Transverse colon (tissue), 4 donors: ENCODE measurements at regions of chr1 and their contacts with region 1.

Region 1: GRCh38 chr1:64421377-64421776 is 48.6 kb upstream of the CACHD1 start:
- DNase-seq: no peak
- H3K4me3 ChIP-seq: no peak overlapping the region
- H3K27ac ChIP-seq: no peak overlapping the region
- H3K4me1 ChIP-seq: no peaks in the 10 kb centered on the region
- H3K27me3 ChIP-seq: no peaks in the 10 kb centered on the region
- CTCF ChIP-seq: no peak
- EP300 ChIP-seq: no peak
- POLR2A ChIP-seq: no peak

Region 2: GRCh38 chr1:64171797-64172281 is 249.5 kb before region 1 on chr1:
- in situ Hi-C with region 1: no loop called
- intact Hi-C with region 1: no loop called
- DNase-seq: no peak
- H3K4me3 ChIP-seq: no peak overlapping the region
- H3K27ac ChIP-seq: peak overlapping the region in 2 of 4 donors; percentile 8 to 14
- H3K4me1 ChIP-seq: peaks cover 0 to 22% (median 13%) of the 10 kb centered on the region in 4 donors
- H3K27me3 ChIP-seq: no peaks in the 10 kb centered on the region
- CTCF ChIP-seq: no peak
- EP300 ChIP-seq: no peak
- POLR2A ChIP-seq: no peak

Region 3: GRCh38 chr1:64292399-64292798 is 129.0 kb before region 1 on chr1:
- in situ Hi-C with region 1: no loop called
- intact Hi-C with region 1: loop called (anchors 10 kb)
- DNase-seq: no peak
- H3K4me3 ChIP-seq: no peak overlapping the region
- H3K27ac ChIP-seq: no peak overlapping the region
- H3K4me1 ChIP-seq: no peaks in the 10 kb centered on the region
- H3K27me3 ChIP-seq: no peaks in the 10 kb centered on the region
- CTCF ChIP-seq: no peak
- EP300 ChIP-seq: no peak
- POLR2A ChIP-seq: no peak